CD4-positive, alpha-beta memory T cell (primary cell): ENCODE measurements at regions of chr2 and their contacts with region 1.

Region 1: GRCh38 chr2:106582148-106583143 is 95.3 kb downstream of the CD8B2 start:
- DNase-seq: peak; percentile 47 to 62 (median 55)
- H3K4me3 ChIP-seq: peak overlapping the region; percentile 51 to 54
- H3K4me3 Mint-ChIP-seq: peak overlapping the region; percentile 88 to 97 (median 92)
- H3K27ac ChIP-seq: no peak overlapping the region
- H3K27ac Mint-ChIP-seq: peak overlapping the region in 4 of 7 donors; percentile 59 to 86 (median 70)
- H3K4me1 ChIP-seq: peaks cover 16% of the 10 kb centered on the region
- H3K4me1 Mint-ChIP-seq: peaks cover 8 to 21% (median 13%) of the 10 kb centered on the region in 4 donors
- H3K27me3 ChIP-seq: peaks cover 9% of the 10 kb centered on the region
- H3K27me3 Mint-ChIP-seq: peaks cover 37 to 44% of the 10 kb centered on the region in 2 donors

Region 2: GRCh38 chr2:105369747-105370690 is 1212.4 kb before region 1 on chr2:
- CTCF ChIA-PET with region 1: no interaction called
- POLR2A ChIA-PET with region 1: no interaction called
- intact Hi-C with region 1: loop called (anchors 1 kb)
- DNase-seq: peak; percentile 77 to 85 (median 82)
- H3K4me3 ChIP-seq: no peak overlapping the region
- H3K4me3 Mint-ChIP-seq: peak overlapping the region in 7 of 8 donors; percentile 0 to 65 (median 16)
- H3K27ac ChIP-seq: no peak overlapping the region
- H3K27ac Mint-ChIP-seq: peak overlapping the region in 5 of 7 donors; percentile 14 to 68 (median 25)
- H3K4me1 ChIP-seq: peaks cover 27% of the 10 kb centered on the region
- H3K4me1 Mint-ChIP-seq: peaks cover 15 to 27% (median 25%) of the 10 kb centered on the region in 4 donors
- H3K27me3 ChIP-seq: no peaks in the 10 kb centered on the region
- H3K27me3 Mint-ChIP-seq: no peaks in the 10 kb centered on the region

Region 3: GRCh38 chr2:106104332-106105062 is 477.9 kb before region 1 on chr2:
- CTCF ChIA-PET with region 1: interaction called, 3 read pairs
- POLR2A ChIA-PET with region 1: no interaction called
- intact Hi-C with region 1: loop called (anchors 1 kb)
- DNase-seq: peak; percentile 68 to 74 (median 72)
- H3K4me3 ChIP-seq: no peak overlapping the region
- H3K4me3 Mint-ChIP-seq: no peak overlapping the region
- H3K27ac ChIP-seq: no peak overlapping the region
- H3K27ac Mint-ChIP-seq: peak overlapping the region; percentile 26 to 79 (median 72)
- H3K4me1 ChIP-seq: peaks cover 13% of the 10 kb centered on the region
- H3K4me1 Mint-ChIP-seq: peaks cover 5 to 18% (median 15%) of the 10 kb centered on the region in 4 donors
- H3K27me3 ChIP-seq: no peaks in the 10 kb centered on the region
- H3K27me3 Mint-ChIP-seq: no peaks in the 10 kb centered on the region

Region 4: DNA sequence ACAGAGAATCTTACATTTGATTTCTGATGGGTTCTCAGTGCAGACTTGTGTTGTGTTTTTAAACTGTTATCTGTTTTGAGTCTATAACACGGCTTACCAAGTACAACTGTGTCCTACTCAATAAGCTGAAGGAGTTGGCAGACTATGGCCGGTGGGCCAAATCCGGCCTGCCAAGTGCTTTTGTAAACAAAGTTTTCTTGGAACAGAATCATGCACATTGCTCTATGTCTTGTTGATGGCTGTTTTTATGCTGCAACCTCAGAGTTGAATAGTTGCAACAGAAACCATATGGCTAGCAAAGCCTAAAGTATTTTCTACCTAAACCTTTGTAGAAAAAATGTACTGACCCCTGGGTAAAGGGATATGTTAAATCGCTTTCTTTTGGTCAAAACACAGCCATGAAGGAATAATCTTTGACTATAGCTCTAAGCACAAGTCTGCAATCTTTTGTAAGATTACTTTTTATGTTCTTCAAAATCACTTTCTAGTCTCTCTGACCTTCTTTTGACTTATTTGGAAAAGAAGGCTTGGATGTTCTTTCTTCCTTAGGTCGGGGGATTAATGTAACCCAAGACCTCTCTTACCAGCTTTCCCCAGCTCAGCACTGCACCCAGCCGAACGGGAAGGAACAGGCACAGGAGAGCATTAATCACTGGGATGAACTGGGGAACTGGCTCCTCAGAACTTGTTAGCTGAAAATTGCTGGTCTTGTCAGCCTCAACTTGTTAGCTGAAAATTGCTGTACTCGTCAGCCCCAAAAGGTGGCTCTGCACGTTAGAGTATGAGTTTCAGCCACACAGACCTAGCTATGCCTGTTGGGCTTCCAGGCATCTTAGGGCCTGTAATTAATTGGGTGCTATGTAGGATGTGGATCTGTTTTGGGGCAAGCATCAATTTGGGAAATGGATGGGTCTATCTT is 19.9 kb before region 1 on chr2:
- CTCF ChIA-PET with region 1: interaction called, 12 read pairs
- POLR2A ChIA-PET with region 1: no interaction called
- intact Hi-C with region 1: no loop called
- DNase-seq: no peak
- H3K4me3 ChIP-seq: no peak overlapping the region
- H3K4me3 Mint-ChIP-seq: no peak overlapping the region
- H3K27ac ChIP-seq: no peak overlapping the region
- H3K27ac Mint-ChIP-seq: no peak overlapping the region
- H3K4me1 ChIP-seq: no peaks in the 10 kb centered on the region
- H3K4me1 Mint-ChIP-seq: peaks cover 0 to 4% (median under 1%) of the 10 kb centered on the region in 4 donors
- H3K27me3 ChIP-seq: no peaks in the 10 kb centered on the region
- H3K27me3 Mint-ChIP-seq: peaks cover 2 to 12% of the 10 kb centered on the region in 2 donors

Region 5: DNA sequence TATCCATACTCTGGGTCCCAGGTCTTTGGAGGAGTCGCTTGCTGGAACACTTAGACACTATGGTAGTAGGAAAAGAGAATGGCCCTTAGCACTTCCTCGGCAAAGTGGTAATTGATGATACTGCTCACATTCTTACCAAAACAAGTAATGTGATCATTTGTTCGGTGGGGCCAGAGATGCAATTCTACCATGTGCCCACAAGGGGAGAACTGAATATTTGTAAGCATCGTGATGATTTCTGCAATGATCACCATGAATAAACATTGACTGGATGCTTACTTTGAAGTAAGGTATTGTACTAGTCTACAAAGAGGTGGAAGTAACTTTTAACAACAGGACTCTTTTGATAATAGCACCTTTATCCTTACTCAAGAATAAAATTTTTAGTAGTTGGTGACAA is 14.4 kb after region 1 on chr2:
- CTCF ChIA-PET with region 1: interaction called, 26 read pairs
- POLR2A ChIA-PET with region 1: no interaction called
- intact Hi-C with region 1: no loop called
- DNase-seq: no peak
- H3K4me3 ChIP-seq: no peak overlapping the region
- H3K4me3 Mint-ChIP-seq: no peak overlapping the region
- H3K27ac ChIP-seq: no peak overlapping the region
- H3K27ac Mint-ChIP-seq: no peak overlapping the region
- H3K4me1 ChIP-seq: no peaks in the 10 kb centered on the region
- H3K4me1 Mint-ChIP-seq: no peaks in the 10 kb centered on the region
- H3K27me3 ChIP-seq: no peaks in the 10 kb centered on the region
- H3K27me3 Mint-ChIP-seq: peaks cover 11 to 22% of the 10 kb centered on the region in 2 donors